ENCODE measurements at regions of chr1 and their contacts with region 1.

Region 1: GRCh38 chr1:74504125-74504932 is 8.1 kb downstream of the LRRC53 start:
- DNase-seq: peak in 1 of 2 experiments; percentile 30
- H3K4me3 ChIP-seq: no peak overlapping the region
- H3K27ac ChIP-seq: no peak overlapping the region
- H3K4me1 ChIP-seq: no peaks in the 10 kb centered on the region
- H3K27me3 ChIP-seq: no peaks in the 10 kb centered on the region
- CTCF ChIP-seq: peak; percentile 83

Region 2: DNA sequence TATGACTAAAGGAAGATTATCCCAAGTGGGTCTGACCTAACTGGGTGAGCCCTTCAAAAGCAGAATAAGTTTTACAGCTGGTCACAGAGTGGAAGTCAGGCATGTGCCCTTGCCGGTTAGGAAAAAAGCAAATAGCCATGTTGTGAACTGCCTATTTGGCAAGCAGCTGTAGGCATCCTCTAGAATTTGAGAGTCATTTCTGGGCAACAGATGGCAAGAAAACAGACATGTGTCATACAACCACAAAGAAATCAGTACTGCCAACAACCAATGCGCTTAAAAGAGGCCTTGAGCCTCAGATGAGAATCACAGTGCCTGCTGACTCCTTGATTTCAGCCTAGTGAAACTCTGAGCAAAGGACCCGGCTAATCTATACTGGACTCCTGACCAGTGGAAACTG is 18.7 kb before region 1 on chr1:
- CTCF ChIA-PET with region 1: no interaction called
- POLR2A ChIA-PET with region 1: no interaction called
- intact Hi-C with region 1: no loop called
- DNase-seq: no peak
- H3K4me3 ChIP-seq: no peak overlapping the region
- H3K27ac ChIP-seq: no peak overlapping the region
- H3K4me1 ChIP-seq: no peaks in the 10 kb centered on the region
- H3K27me3 ChIP-seq: no peaks in the 10 kb centered on the region
- CTCF ChIP-seq: no peak

Region 3: DNA sequence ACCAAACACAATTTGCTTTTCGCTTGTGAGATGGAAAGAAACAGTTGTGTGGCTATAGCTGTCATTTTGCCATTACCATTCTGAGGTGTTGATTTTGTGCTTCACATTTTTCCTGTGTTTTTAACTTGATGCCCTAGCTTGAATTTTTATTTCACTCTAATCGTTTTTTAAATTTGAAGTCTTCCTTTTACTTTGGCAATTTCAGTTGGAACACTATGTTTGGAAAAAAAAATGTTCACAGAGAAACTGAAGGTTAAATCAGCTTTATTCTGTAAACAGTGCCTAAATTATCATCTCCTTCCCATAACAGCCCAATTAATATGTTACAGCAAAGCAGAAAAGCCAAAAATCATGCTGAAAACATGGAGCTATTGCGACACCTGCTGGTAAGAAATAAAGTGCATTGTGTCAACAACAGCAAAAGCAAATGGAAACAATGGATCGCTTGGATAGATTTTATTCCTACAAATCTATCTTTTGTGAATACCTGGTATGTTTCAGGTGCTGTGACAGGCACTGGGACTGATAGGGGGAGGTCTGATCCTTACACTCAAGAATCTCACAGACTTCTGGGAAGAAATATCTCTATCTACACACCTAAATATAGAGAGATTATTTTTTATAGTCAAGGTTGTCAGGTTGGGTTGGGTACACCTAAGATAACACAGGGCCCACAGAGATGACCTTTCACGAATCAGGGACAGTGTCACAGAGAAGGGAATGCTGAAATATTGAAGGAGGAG is 185.5 kb after region 1 on chr1:
- CTCF ChIA-PET with region 1: no interaction called
- POLR2A ChIA-PET with region 1: no interaction called
- intact Hi-C with region 1: loop called (anchors 5 kb)
- DNase-seq: peak; percentile 43 to 67
- H3K4me3 ChIP-seq: no peak overlapping the region
- H3K27ac ChIP-seq: no peak overlapping the region
- H3K4me1 ChIP-seq: peaks cover 12% of the 10 kb centered on the region
- H3K27me3 ChIP-seq: no peaks in the 10 kb centered on the region
- CTCF ChIP-seq: peak; percentile 95

Region 4: DNA sequence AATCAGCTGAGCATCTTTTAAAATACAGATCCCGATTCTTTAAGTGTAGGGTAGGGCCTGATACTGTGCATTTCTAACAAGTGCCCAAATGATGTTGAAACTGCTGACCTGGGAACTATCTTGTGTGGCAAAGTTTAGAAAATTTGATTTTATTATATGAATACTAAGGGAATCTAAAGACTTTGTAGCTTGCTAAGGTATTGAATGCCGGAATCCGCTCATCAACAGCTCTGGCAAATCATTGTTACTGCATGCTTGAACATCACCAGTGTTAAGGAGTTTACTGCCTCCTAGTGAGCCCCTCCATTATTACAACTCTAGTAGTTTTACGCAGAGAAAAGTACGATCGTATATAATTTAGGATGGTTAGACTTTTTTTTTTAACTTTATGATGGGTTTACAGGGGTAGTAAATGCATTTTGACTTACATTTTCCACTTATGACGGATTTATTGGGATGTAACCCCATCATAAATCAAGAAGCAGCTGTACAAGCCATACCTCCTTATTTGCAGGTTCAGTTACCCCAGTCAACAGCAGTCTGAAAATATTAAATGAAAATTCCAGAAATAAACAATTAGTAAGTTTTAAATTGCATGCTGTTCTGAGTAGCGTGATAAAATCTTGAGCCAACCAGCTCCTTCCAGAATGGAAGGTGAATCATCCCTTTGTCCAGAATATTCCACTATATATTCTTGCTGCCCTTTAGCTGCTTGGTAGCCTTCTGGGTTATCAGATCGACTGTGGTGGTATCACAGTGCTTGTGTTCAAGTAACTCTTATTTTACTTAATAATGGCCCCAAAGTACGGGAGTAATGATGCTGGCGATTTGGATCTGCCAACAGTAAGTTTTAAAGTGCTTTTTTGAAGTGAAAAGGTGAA is 229.5 kb after region 1 on chr1:
- CTCF ChIA-PET with region 1: no interaction called
- POLR2A ChIA-PET with region 1: no interaction called
- intact Hi-C with region 1: loop called (anchors 10 kb)
- DNase-seq: peak; percentile 26 to 79
- H3K4me3 ChIP-seq: peak overlapping the region; percentile 95
- H3K27ac ChIP-seq: peak overlapping the region; percentile 84
- H3K4me1 ChIP-seq: peaks cover 25% of the 10 kb centered on the region
- H3K27me3 ChIP-seq: no peaks in the 10 kb centered on the region
- CTCF ChIP-seq: peak; percentile 89